ENCODE measurements at regions of chr19 and their contacts with region 1.

Region 1: DNA sequence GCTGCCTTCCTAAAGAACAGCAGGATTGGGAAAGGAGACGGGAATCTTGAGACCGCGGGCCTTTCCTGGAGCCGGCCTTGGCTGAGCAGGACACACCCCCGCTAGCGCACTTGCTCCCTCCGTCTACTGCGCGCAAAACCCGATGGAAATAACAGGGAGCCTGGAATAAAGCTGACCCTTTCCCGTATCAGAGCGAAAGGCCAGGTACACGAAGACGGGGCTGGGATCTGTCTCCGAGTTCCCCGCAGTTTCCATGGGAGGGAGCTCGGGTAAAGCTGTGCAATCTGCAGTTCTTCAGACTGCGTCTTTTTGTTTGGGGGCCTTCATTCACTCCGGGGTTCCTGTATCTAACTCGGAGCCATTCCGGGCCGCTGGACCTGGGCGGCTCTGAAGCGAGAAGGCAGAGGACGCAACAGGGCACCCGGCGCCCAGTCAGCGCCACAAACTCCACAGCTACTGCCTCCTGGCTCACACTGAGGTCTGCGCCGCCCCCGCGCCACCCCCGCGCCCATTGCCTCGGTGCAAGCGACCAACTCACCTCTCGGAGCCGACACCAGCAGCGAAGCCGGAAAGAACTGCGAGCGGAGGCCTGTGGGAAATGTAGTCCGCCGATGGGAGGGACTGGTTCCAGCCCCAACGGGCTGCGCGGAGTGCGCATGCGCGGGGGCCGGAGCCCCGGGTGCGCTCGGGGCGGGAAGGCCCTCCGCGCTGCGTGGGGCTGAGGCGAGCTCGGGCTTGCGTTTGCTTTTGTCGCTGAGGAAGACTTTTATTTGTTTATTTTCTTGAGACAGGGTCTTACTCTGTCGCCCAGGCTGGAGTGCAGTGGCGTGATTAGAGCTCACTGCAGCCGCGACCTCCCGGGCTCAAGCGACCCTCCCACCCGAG is at the start of gene ZFP14:
- DNase-seq: peak; percentile 91 to 97 (median 94)
- ATAC-seq: peak; percentile 96 to 98
- H3K4me3 Mint-ChIP-seq: peak within 1 kb of the TSS; percentile 89 to 98 (median 96)
- H3K27ac Mint-ChIP-seq: peak within 1 kb of the TSS; percentile 76 to 99 (median 97)
- H3K4me1 Mint-ChIP-seq: peaks cover 11 to 27% (median 22%) of the 10 kb centered on the region in 4 donors
- H3K27me3 Mint-ChIP-seq: no peaks in the 10 kb centered on the region
- polyA plus RNA-seq, gene ZFP14: 3.4 to 5.5 (median 4.6) TPM

Region 2: DNA sequence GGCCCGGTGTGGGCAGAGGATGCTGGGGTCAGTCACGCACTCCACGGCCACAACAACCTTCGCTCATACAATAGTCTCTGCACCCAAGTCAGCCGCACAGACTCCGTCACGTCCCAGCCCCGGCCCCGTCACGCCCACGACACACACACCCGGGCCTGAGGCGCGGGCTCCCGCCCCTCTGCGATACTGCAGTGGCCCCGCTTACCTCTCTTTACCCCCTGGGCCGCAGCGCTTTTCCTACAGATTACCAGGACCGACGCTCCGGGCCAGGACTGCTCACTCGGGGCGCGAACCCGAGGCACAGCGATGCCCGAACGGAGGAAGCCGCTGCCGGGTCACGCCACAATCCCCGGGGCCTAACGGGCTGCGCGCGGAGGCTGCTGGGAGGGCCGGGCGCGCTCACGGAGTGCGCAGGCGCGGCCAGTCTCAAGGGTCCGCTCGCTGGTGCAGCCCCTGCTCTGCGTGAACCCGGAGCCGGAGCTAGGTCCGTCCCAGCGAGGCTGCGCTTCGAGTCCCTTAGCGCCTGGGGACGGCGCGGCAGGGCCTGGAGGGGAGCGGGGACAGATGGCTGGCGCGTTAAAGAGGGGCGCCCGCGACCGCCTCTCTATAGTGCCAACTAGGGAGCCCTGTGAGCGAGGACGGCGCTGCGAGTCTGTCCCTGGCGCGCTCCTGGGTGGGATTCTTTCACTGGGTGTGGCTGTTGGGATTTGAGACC is 39.6 kb after region 1 on chr19 and contains the start of gene ZFP82:
- POLR2A ChIA-PET with region 1: interaction called, 13 read pairs
- DNase-seq: peak; percentile 51 to 83 (median 72)
- ATAC-seq: peak; percentile 92
- H3K4me3 Mint-ChIP-seq: peak within 1 kb of the TSS; percentile 84 to 99 (median 93)
- H3K27ac Mint-ChIP-seq: peak within 1 kb of the TSS; percentile 87 to 99 (median 94)
- H3K4me1 Mint-ChIP-seq: peaks cover 9 to 25% (median 22%) of the 10 kb centered on the region in 4 donors
- H3K27me3 Mint-ChIP-seq: peaks cover 10 to 31% (median 17%) of the 10 kb centered on the region in 5 donors
- polyA plus RNA-seq, gene ZFP82: 2.8 to 13.5 (median 5.3) TPM